MCF 10A (cell line): ENCODE measurements at regions of chr2 and their contacts with region 1.

Region 1: GRCh38 chr2:234422273-234422767 is 74.6 kb downstream of the ARL4C start:
- DNase-seq: peak; percentile 83
- H3K4me3 Mint-ChIP-seq: no peak overlapping the region
- H3K27ac Mint-ChIP-seq: peak overlapping the region; percentile 87
- H3K4me1 Mint-ChIP-seq: peaks cover 26% of the 10 kb centered on the region
- H3K27me3 Mint-ChIP-seq: no peaks in the 10 kb centered on the region
- CTCF ChIP-seq: no peak

Region 2: DNA sequence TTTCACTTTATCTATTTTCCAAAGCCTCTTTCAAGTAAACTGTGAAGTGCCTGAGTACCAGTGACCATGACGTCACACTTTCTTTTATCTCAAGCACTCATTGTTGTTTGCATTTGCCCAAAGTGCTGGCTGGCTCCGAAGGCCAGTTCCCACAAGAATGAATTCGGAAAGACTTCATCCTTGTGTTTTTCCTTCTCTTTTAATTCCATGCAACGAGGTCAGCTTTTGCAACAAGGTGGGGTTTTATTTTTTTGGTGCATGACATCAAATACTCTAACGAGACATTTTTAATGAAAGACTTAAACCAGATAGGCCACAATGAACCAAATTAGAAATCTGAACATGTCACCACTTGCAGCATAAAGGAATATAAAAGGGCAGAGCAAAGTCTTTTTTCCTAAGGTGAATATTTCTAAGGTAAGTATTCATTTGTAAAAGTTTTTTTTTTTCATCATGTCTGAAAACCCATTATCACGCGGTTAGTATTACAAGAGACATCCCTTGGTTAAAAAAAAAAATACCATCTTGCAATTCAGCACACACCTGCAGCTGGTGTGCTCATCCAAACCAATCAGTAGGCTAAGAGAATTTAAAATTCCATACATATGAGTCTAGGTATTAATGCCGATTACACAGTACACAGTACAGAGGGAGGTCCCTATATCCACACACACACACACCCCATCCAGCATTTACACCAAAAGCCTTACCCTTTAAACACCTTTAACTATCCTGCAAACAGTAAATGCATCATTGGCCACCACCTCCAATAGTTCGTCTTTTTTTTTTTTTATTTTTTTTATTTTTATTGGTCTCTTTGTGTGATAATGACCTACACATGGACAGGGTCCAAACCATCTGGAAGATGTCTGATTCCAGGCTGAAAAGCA is 72.3 kb after region 1 on chr2:
- CTCF ChIA-PET with region 1: interaction called, 3 read pairs
- POLR2A ChIA-PET with region 1: interaction called, 19 read pairs
- intact Hi-C with region 1: loop called (anchors 1 kb)
- DNase-seq: peak; percentile 14
- H3K4me3 Mint-ChIP-seq: peak overlapping the region; percentile 78
- H3K27ac Mint-ChIP-seq: peak overlapping the region; percentile 55
- H3K4me1 Mint-ChIP-seq: peaks cover 29% of the 10 kb centered on the region
- H3K27me3 Mint-ChIP-seq: no peaks in the 10 kb centered on the region
- CTCF ChIP-seq: no peak